Esophagus muscularis mucosa (tissue), 4 donors: ENCODE measurements at regions of chr1 and their contacts with region 1.

Region 1: DNA sequence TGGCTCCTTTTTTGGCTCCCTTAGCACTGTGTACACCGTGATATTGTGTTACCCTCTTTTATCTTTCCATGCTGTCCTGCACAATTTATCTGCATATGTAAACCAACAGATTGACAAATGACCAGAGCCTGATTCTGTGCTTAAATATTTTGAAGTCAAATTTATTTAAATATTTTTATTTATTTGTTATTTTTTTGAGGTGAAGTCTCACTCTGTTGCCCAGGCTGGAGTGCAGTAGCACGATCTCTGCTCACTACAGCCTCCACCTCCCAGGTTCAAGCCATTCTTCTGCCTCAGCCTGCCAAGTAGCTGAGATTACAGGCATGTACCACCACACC is 12.8 kb downstream of the PMF1 start:
- DNase-seq: no peak
- H3K4me3 ChIP-seq: no peak overlapping the region
- H3K27ac ChIP-seq: no peak overlapping the region
- H3K4me1 ChIP-seq: peaks cover 7 to 27% (median 23%) of the 10 kb centered on the region in 4 donors
- H3K27me3 ChIP-seq: no peaks in the 10 kb centered on the region
- CTCF ChIP-seq: no peak
- EP300 ChIP-seq: no peak
- POLR2A ChIP-seq: no peak

Region 2: DNA sequence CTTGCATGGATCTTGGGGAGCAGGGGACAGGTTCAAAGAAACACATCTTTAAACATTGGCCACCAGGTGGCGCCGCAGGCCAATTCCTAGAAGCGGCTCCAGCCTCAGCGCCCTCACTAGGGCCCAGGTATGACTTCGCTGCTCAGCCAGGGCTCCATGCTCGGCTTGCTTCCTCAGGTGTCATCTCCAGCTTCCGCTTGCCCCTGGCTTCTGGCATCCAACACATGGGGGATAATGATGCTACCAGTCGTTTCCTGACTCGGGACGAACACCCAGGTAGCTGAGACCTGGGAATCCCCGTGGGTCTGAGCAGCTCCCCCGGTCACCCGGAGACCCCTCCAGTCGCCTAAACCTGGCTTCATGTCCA is 134.8 kb before region 1 on chr1:
- intact Hi-C with region 1: loop called (anchors 2 kb)
- DNase-seq: peak; percentile 96
- H3K4me3 ChIP-seq: no peak overlapping the region
- H3K27ac ChIP-seq: no peak overlapping the region
- H3K4me1 ChIP-seq: peaks cover 15 to 23% (median 19%) of the 10 kb centered on the region in 4 donors
- H3K27me3 ChIP-seq: no peaks in the 10 kb centered on the region
- CTCF ChIP-seq: peak; percentile 79 to 84 (median 82)
- EP300 ChIP-seq: no peak
- POLR2A ChIP-seq: no peak

Region 3: GRCh38 chr1:156146020-156146768 is 79.5 kb before region 1 on chr1:
- intact Hi-C with region 1: loop called (anchors 1 kb)
- DNase-seq: no peak
- H3K4me3 ChIP-seq: peak overlapping the region in 3 of 4 donors; percentile 7 to 22 (median 13)
- H3K27ac ChIP-seq: peak overlapping the region in 1 of 4 donors; percentile 19
- H3K4me1 ChIP-seq: peaks cover 24 to 52% (median 48%) of the 10 kb centered on the region in 4 donors
- H3K27me3 ChIP-seq: peaks cover 0 to 25% (median 4%) of the 10 kb centered on the region in 4 donors
- CTCF ChIP-seq: peak; percentile 69 to 78 (median 76)
- EP300 ChIP-seq: no peak
- POLR2A ChIP-seq: no peak